Heart right ventricle (tissue), 16 donors: ENCODE measurements at regions of chr12 and their contacts with region 1.

Region 1: GRCh38 chr12:93419388-93420034 is 22.2 kb downstream of the UBE2N start:
- DNase-seq: no peak
- ATAC-seq: peak in 7 of 8 donors; percentile 51 to 75 (median 56)
- H3K4me3 ChIP-seq: peak overlapping the region in 1 of 10 donors; percentile 4
- H3K27ac ChIP-seq: peak overlapping the region in 2 of 10 donors; percentile 1 to 2
- H3K4me1 ChIP-seq: peaks cover 2 to 82% (median 67%) of the 10 kb centered on the region in 9 donors
- H3K27me3 ChIP-seq: no peaks in the 10 kb centered on the region
- CTCF ChIP-seq: peak; percentile 48 to 81 (median 72)

Region 2: GRCh38 chr12:92995258-92995903 is 424.1 kb before region 1 on chr12:
- intact Hi-C with region 1: loop called in 1 of 10 experiments (anchors 10 kb)
- DNase-seq: no peak
- ATAC-seq: no peak
- H3K4me3 ChIP-seq: no peak overlapping the region
- H3K27ac ChIP-seq: no peak overlapping the region
- H3K4me1 ChIP-seq: no peaks in the 10 kb centered on the region
- H3K27me3 ChIP-seq: no peaks in the 10 kb centered on the region
- CTCF ChIP-seq: no peak

Region 3: GRCh38 chr12:93137656-93138612 is 281.6 kb before region 1 on chr12:
- intact Hi-C with region 1: loop called in 1 of 10 experiments (anchors 5 kb)
- DNase-seq: no peak
- ATAC-seq: peak in 7 of 8 donors; percentile 22 to 71 (median 61)
- H3K4me3 ChIP-seq: no peak overlapping the region
- H3K27ac ChIP-seq: peak overlapping the region in 7 of 10 donors; percentile 17 to 68 (median 42)
- H3K4me1 ChIP-seq: peaks cover 0 to 55% (median 18%) of the 10 kb centered on the region in 9 donors
- H3K27me3 ChIP-seq: no peaks in the 10 kb centered on the region
- CTCF ChIP-seq: no peak